Activated T-helper 1 cell treated with anti-CD3 and anti-CD28 coated beads, Interleukin-12 subunit alpha, Interleukin-12 subunit beta, Interleukin-2, Interleukin-4 antibody, amounts not matched to agents 30 ng/mL and 10 ng/mL and 1 ng/mL, durations not matched to agents 14 hours and 24 hours and 36 hours (primary cell): ENCODE measurements at regions of chr15 and their contacts with region 1.

Region 1: GRCh38 chr15:39782441-39783138 is at the start of gene FSIP1:
- DNase-seq: peak; percentile 94
- H3K4me3 Mint-ChIP-seq: peak within 1 kb of the TSS; percentile 86
- H3K27ac Mint-ChIP-seq: peak within 1 kb of the TSS; percentile 75
- H3K4me1 Mint-ChIP-seq: peaks cover 43% of the 10 kb centered on the region
- H3K27me3 Mint-ChIP-seq: peaks cover 7% of the 10 kb centered on the region
- total RNA-seq, gene FSIP1: 0.26 and 0.34 TPM in 2 replicates

Region 2: GRCh38 chr15:39624806-39625205 is 157.8 kb before region 1 on chr15:
- intact Hi-C with region 1: loop called (anchors 5 kb)
- DNase-seq: peak; percentile 65
- H3K4me3 Mint-ChIP-seq: peak overlapping the region; percentile 71
- H3K27ac Mint-ChIP-seq: peak overlapping the region; percentile 98
- H3K4me1 Mint-ChIP-seq: peaks cover 81% of the 10 kb centered on the region
- H3K27me3 Mint-ChIP-seq: no peaks in the 10 kb centered on the region

Region 3: DNA sequence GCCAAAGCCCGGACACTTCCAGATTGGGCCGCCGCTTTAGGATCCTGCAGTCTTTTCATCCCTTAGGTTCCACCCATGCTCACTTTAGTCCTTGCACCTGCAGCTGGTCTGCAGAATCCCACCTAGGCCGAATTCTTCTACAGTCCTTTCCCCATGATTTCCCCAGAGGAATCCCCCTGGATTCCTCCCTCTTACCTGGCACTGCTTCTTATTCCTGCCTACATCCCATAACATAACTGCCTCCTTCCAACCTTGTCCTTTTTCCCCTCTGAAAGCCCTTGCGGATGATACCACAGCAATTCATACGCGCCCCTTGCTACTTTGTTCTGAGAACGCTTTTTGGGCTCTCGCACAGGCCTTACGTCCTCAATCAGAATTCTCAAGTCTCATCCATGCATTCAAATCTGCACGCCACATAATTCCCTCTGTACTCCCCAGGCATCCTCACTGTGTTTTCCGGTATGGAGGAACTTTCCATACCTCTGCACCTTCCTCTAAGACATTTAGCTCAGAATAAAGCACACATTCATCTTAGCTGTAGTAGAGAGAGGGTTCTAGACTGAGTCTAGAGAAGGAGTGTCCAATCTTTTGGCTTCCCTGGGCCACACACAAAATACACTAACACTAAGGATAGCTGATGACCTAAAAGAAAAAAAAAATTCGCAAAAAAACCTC is 151.9 kb after region 1 on chr15:
- intact Hi-C with region 1: loop called (anchors 1 kb)
- DNase-seq: no peak
- H3K4me3 Mint-ChIP-seq: peak overlapping the region; percentile 94
- H3K27ac Mint-ChIP-seq: peak overlapping the region; percentile 84
- H3K4me1 Mint-ChIP-seq: peaks cover 49% of the 10 kb centered on the region
- H3K27me3 Mint-ChIP-seq: no peaks in the 10 kb centered on the region

Region 4: DNA sequence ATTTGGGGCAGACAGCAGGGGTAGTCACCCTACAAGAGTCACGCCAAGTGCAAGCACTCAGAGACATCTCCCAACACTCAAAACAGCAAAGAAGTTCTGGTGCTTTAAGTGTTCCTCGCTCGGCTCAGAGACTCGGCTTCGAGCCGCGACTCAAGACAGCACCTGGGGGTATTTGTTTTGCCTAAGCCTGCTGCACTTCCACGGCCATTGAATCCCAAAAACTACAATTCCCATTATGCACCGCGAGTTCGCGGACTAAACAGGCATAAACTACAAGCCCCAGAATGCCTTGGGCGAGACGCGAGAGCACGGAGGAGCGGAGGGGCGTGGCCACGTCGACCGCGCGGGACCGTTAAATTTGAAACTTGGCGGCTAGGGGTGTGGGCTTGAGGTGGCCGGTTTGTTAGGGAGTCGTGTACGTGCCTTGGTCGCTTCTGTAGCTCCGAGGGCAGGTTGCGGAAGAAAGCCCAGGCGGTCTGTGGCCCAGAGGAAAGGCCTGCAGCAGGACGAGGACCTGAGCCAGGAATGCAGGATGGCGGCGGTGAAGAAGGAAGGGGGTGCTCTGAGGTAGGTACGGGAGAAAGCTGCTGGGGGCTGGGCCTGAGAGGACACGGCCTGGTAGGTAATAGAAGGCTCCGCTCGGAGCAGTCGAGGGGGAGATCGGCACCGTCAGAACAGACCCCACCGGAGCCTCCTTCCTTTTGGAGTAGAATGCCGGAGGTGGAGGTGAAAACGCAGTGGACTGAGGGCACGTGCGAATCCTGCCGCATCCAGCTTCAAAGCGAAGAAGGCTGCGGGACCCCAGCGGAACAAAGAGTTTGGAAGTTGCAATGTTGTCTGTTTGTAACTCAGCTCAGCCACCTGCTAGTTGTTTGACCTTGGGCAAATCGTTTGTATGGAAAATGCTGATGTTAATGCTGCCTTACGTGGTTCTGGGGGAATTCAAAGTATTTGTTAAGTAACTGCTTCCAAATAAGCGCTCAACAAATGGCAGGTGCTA is 378.4 kb after region 1 on chr15 and contains the start of gene BUB1B:
- intact Hi-C with region 1: loop called (anchors 2 kb)
- DNase-seq: peak; percentile 93
- H3K4me3 Mint-ChIP-seq: no peak within 1 kb of the TSS
- H3K27ac Mint-ChIP-seq: no peak within 1 kb of the TSS
- H3K4me1 Mint-ChIP-seq: peaks cover 10% of the 10 kb centered on the region
- H3K27me3 Mint-ChIP-seq: no peaks in the 10 kb centered on the region
- total RNA-seq, gene BUB1B: 71.0 and 76.1 TPM in 2 replicates

Region 5: DNA sequence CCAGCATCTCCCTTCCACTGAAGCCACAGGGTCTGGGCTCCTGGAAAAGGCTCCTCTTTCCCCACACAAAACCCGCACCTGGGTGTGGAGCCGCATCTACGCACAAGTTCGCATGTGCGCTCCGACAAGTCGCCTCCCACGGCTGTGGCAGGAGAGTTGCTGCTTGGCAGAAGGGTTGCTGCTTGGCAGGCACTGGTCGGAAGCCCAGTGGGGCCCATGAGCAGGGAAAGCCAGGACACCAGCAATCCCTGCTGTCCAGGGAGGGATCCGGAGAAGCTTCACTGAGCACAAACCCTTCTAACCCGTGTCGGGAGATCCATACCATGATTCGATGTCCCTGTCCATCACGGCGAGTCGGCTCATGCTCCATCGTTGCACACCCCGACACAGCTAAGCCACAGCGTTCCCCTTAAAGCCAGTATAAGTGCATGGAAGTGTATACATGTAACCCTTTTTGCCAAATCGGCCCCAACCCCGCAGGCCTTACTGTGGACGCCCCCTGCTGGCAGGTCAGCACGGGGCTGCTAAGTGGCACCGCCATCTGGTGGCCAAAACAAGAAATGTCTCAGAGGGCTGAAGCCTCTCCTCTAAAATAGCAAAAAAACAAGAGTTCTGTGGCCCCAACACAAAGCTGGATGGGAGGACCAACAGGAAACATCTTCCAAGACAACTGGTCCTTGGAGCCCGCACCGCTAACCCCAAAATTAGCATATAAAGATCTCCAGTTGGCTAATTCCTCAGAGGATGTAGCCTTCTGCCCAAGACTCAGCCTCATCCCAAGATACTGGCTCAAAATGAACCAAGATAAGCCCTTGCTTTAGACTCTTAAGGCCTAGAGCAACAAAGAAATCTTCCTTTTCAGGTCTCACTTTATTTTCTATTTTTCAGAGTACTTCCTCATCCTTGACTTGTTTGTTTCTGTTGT is 492.0 kb after region 1 on chr15:
- intact Hi-C with region 1: loop called (anchors 1 kb)
- DNase-seq: peak; percentile 83
- H3K4me3 Mint-ChIP-seq: no peak overlapping the region
- H3K27ac Mint-ChIP-seq: no peak overlapping the region
- H3K4me1 Mint-ChIP-seq: peaks cover 5% of the 10 kb centered on the region
- H3K27me3 Mint-ChIP-seq: peaks cover 31% of the 10 kb centered on the region

Region 6: GRCh38 chr15:40564591-40565332 is 782.2 kb after region 1 on chr15 and contains the start of gene CCDC32:
- intact Hi-C with region 1: loop called (anchors 10 kb)
- DNase-seq: peak; percentile 96
- H3K4me3 Mint-ChIP-seq: peak within 1 kb of the TSS; percentile 96
- H3K27ac Mint-ChIP-seq: peak within 1 kb of the TSS; percentile 96
- H3K4me1 Mint-ChIP-seq: peaks cover 43% of the 10 kb centered on the region
- H3K27me3 Mint-ChIP-seq: no peaks in the 10 kb centered on the region
- total RNA-seq, gene CCDC32: 28.4 and 36.9 TPM in 2 replicates